ENCODE measurements at regions of chr12 and their contacts with region 1.

Region 1: GRCh38 chr12:31272607-31273225 is 53.2 kb downstream of the SINHCAF start:
- DNase-seq: no peak
- ATAC-seq: peak in 1 of 4 experiments; percentile 33
- H3K4me3 ChIP-seq: no peak overlapping the region
- H3K4me3 Mint-ChIP-seq: no peak overlapping the region
- H3K27ac ChIP-seq: no peak overlapping the region
- H3K27ac Mint-ChIP-seq: peak overlapping the region in 1 of 2 donors; percentile 55
- H3K4me1 ChIP-seq: no peaks in the 10 kb centered on the region
- H3K4me1 Mint-ChIP-seq: no peaks in the 10 kb centered on the region
- H3K27me3 ChIP-seq: no peaks in the 10 kb centered on the region
- H3K27me3 Mint-ChIP-seq: no peaks in the 10 kb centered on the region

Region 2: GRCh38 chr12:30268041-30268440 is 1004.7 kb before region 1 on chr12:
- CTCF ChIA-PET with region 1: no interaction called
- POLR2A ChIA-PET with region 1: no interaction called
- DNase-seq: no peak
- ATAC-seq: no peak
- H3K4me3 ChIP-seq: no peak overlapping the region
- H3K4me3 Mint-ChIP-seq: no peak overlapping the region
- H3K27ac ChIP-seq: no peak overlapping the region
- H3K27ac Mint-ChIP-seq: no peak overlapping the region
- H3K4me1 ChIP-seq: no peaks in the 10 kb centered on the region
- H3K4me1 Mint-ChIP-seq: no peaks in the 10 kb centered on the region
- H3K27me3 ChIP-seq: no peaks in the 10 kb centered on the region
- H3K27me3 Mint-ChIP-seq: no peaks in the 10 kb centered on the region

Region 3: GRCh38 chr12:30847259-30847658 is 425.5 kb before region 1 on chr12:
- CTCF ChIA-PET with region 1: interaction called, 14 to 21 read pairs
- POLR2A ChIA-PET with region 1: no interaction called
- DNase-seq: peak in 6 of 35 experiments; percentile 8 to 71 (median 15)
- ATAC-seq: no peak
- H3K4me3 ChIP-seq: no peak overlapping the region
- H3K4me3 Mint-ChIP-seq: no peak overlapping the region
- H3K27ac ChIP-seq: no peak overlapping the region
- H3K27ac Mint-ChIP-seq: no peak overlapping the region
- H3K4me1 ChIP-seq: peaks cover 0 to 6% of the 10 kb centered on the region in 2 experiments
- H3K4me1 Mint-ChIP-seq: peaks cover 9 to 10% (median 9%) of the 10 kb centered on the region in 3 donors
- H3K27me3 ChIP-seq: no peaks in the 10 kb centered on the region
- H3K27me3 Mint-ChIP-seq: no peaks in the 10 kb centered on the region

Region 4: GRCh38 chr12:31250179-31250578 is 22.5 kb before region 1 on chr12:
- CTCF ChIA-PET with region 1: interaction called, 5 to 26 read pairs
- POLR2A ChIA-PET with region 1: no interaction called
- DNase-seq: no peak
- ATAC-seq: no peak
- H3K4me3 ChIP-seq: no peak overlapping the region
- H3K4me3 Mint-ChIP-seq: no peak overlapping the region
- H3K27ac ChIP-seq: no peak overlapping the region
- H3K27ac Mint-ChIP-seq: no peak overlapping the region
- H3K4me1 ChIP-seq: no peaks in the 10 kb centered on the region
- H3K4me1 Mint-ChIP-seq: no peaks in the 10 kb centered on the region
- H3K27me3 ChIP-seq: peaks cover 0 to 9% of the 10 kb centered on the region in 2 experiments
- H3K27me3 Mint-ChIP-seq: peaks cover 0 to 4% of the 10 kb centered on the region in 2 donors

Region 5: DNA sequence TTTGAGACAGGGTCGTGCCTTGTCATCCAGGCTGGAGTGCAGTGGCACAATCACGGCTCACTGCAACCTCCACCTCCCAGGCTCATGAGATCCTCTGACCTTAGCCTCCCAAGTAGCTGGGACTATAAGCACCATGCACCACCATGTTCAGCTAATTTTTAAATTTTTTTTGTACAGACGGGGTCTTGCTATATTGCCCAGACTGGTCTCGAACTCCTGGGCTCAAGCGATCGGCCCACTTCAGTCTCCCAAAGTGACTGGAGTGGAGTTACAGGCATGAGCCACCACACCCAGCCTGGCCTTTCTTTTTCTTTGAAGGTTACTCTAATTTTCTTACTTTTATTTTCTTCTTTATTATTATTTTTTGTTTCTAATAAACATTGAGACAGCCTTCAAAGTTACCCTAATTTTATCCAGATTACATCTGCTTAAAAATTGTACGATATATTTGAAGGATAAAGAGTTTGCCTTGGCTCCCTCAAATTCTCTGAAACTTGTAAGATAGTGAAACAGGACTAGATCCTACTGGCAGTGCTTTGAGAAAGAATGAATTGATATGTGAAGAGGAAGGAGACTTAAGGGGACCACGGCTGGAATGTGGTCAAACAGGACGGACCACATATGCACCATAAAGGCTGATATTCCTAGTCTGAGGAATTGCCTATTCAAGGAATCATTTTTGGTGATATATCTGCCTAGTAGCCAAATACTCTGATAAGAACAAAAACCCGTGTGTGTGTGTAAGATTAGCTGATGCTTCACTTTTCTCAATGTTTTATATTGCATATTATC is 67.3 kb after region 1 on chr12:
- CTCF ChIA-PET with region 1: no interaction called
- POLR2A ChIA-PET with region 1: no interaction called
- DNase-seq: no peak
- ATAC-seq: no peak
- H3K4me3 ChIP-seq: no peak overlapping the region
- H3K4me3 Mint-ChIP-seq: no peak overlapping the region
- H3K27ac ChIP-seq: no peak overlapping the region
- H3K27ac Mint-ChIP-seq: no peak overlapping the region
- H3K4me1 ChIP-seq: no peaks in the 10 kb centered on the region
- H3K4me1 Mint-ChIP-seq: no peaks in the 10 kb centered on the region
- H3K27me3 ChIP-seq: no peaks in the 10 kb centered on the region
- H3K27me3 Mint-ChIP-seq: no peaks in the 10 kb centered on the region

Region 6: GRCh38 chr12:31423405-31423804 is 150.7 kb after region 1 on chr12:
- CTCF ChIA-PET with region 1: no interaction called
- POLR2A ChIA-PET with region 1: no interaction called
- DNase-seq: no peak
- ATAC-seq: no peak
- H3K4me3 ChIP-seq: no peak overlapping the region
- H3K4me3 Mint-ChIP-seq: no peak overlapping the region
- H3K27ac ChIP-seq: no peak overlapping the region
- H3K27ac Mint-ChIP-seq: no peak overlapping the region
- H3K4me1 ChIP-seq: no peaks in the 10 kb centered on the region
- H3K4me1 Mint-ChIP-seq: no peaks in the 10 kb centered on the region
- H3K27me3 ChIP-seq: no peaks in the 10 kb centered on the region
- H3K27me3 Mint-ChIP-seq: peaks cover 0 to 2% of the 10 kb centered on the region in 2 donors